Heart right ventricle (tissue), 16 donors: ENCODE measurements at regions of chr12 and their contacts with region 1.

Region 1: DNA sequence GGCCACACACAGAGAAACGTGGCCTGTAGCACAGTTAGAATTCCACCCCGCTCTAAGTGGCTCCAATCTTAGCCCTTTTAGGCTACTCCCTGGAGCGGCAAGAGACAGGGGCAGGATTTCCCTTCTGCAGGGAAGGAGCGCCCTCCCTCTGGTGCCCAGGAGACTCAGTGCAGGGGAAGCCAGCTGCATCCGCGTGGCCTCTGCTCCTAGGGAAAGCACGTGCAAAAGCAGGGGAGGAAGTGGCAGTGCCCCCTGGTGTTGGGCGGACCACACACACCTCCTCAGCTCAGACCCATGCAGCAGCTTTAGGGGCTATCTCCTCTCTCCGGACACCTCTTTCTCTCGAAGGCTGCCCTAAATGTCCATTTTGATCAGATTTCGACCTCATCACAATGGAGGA is 50.0 kb downstream of the SPRING1 start:
- DNase-seq: peak; percentile 29 to 65
- ATAC-seq: peak; percentile 63 to 86 (median 78)
- H3K4me3 ChIP-seq: no peak overlapping the region
- H3K27ac ChIP-seq: no peak overlapping the region
- H3K4me1 ChIP-seq: peaks cover 0 to 11% (median 2%) of the 10 kb centered on the region in 9 donors
- H3K27me3 ChIP-seq: peaks cover 0 to 27% (median 19%) of the 10 kb centered on the region in 7 donors
- CTCF ChIP-seq: peak; percentile 12 to 70 (median 53)

Region 2: GRCh38 chr12:115752913-115753726 is 934.8 kb before region 1 on chr12:
- intact Hi-C with region 1: no loop called
- DNase-seq: peak in 1 of 2 donors; percentile 59
- ATAC-seq: peak; percentile 81 to 96 (median 94)
- H3K4me3 ChIP-seq: no peak overlapping the region
- H3K27ac ChIP-seq: peak overlapping the region in 2 of 10 donors; percentile 1 to 9
- H3K4me1 ChIP-seq: peaks cover 0 to 34% (median 16%) of the 10 kb centered on the region in 9 donors
- H3K27me3 ChIP-seq: peaks cover 0 to 46% (median 29%) of the 10 kb centered on the region in 7 donors
- CTCF ChIP-seq: peak; percentile 49 to 81 (median 72)

Region 3: DNA sequence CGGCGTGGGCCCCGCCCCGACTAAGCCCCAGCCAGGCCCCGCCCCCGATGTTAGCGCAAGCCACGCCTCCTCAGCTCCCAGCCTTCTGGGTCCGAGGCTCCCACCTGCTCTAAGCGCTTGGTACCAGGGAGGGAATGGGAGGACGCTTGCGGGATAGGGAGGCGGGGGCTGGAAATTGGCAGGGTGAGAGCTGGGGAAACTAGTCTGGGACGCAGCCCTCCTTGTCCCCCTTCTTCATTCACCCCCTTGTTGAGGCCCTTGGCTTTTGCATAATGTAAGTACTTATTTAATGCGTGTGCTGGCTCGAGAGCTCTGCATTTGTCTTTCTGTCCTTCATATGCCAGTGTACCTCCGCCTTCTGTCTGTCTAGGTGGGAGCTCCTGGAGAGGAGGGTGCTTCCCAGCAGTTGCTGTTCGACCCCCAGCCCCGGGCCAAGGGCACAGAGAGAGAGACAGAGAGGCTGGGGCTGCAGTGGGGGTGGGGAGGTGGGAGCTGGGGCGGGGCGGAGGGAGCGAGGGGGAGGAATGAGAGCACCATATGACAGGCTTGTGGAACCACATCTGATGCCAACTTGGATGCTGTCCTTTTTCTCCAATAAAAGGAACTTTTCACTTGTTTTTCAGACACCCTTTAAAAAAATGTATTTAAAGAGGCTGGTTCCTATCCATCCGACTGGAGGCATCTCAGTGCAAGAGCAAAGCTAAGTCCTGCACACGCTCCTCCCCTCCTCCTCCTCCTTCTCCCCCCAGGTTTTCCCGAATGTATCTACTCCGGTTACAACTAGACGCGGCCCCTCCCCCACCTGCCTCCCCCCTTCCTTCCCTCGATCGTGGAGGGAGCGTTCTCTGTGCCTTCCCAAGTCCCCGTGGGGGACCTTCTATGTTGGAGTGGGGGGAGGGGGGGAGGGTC is 154.3 kb before region 1 on chr12:
- intact Hi-C with region 1: loop called in 1 of 10 experiments (anchors 10 kb)
- DNase-seq: peak; percentile 67 to 79
- ATAC-seq: peak; percentile 77 to 91 (median 87)
- H3K4me3 ChIP-seq: peak overlapping the region; percentile 25 to 64 (median 56)
- H3K27ac ChIP-seq: peak overlapping the region in 4 of 10 donors; percentile 34 to 71 (median 36)
- H3K4me1 ChIP-seq: peaks cover 0 to 38% (median 20%) of the 10 kb centered on the region in 9 donors
- H3K27me3 ChIP-seq: peaks cover 0 to 28% (median 0%) of the 10 kb centered on the region in 7 donors
- CTCF ChIP-seq: no peak